Endothelial cell of umbilical vein (primary cell): ENCODE measurements at regions of chr5 and their contacts with region 1.

Region 1: GRCh38 chr5:148730943-148731861 is 76.9 kb upstream of the HTR4 start:
- DNase-seq: peak; percentile 89
- H3K4me3 ChIP-seq: no peak overlapping the region
- H3K27ac ChIP-seq: no peak overlapping the region
- H3K4me1 ChIP-seq: peaks cover 23% of the 10 kb centered on the region
- H3K27me3 ChIP-seq: no peaks in the 10 kb centered on the region
- CTCF ChIP-seq: peak; percentile 78 to 82
- POLR2A ChIP-seq: no peak

Region 2: GRCh38 chr5:148125641-148126040 is 605.6 kb before region 1 on chr5:
- CTCF ChIA-PET with region 1: interaction called, 11 read pairs
- POLR2A ChIA-PET with region 1: no interaction called
- dilution Hi-C with region 1: no loop called
- intact Hi-C with region 1: no loop called
- DNase-seq: peak; percentile 5
- H3K4me3 ChIP-seq: no peak overlapping the region
- H3K27ac ChIP-seq: no peak overlapping the region
- H3K4me1 ChIP-seq: no peaks in the 10 kb centered on the region
- H3K27me3 ChIP-seq: no peaks in the 10 kb centered on the region
- CTCF ChIP-seq: peak in 1 of 2 donors; percentile 9
- POLR2A ChIP-seq: no peak

Region 3: DNA sequence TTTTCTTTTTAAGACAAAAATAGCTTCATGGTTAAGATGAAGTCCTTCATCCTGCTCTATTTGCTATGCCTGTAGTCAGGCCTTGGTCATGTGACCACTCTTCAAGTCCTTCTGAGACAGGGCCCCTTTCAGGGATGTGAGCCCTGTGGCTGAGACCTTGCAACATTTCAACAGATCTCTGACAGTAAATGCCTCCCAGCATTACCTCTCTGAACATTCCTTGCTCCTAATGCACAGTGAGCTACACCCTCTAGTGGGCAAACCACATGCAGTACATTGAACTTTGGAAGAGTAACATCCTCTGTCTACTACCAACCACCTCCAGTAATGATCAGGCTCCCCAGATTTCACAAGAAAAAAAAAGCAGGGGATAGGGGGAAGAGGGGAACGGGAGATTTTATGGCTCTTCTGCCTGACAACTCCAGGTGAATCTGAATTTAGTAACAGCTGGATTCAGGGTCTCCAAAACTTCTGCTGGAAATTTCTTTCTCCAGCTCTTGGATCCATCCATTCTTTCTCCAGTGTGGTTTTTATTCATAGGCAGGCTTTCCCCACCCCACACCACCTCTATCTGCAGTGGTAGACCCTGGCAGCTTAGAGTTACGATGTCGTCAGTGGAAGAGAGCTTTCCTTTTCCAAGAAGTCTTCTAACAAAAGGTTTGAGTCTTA is 356.4 kb before region 1 on chr5:
- CTCF ChIA-PET with region 1: interaction called, 37 read pairs
- POLR2A ChIA-PET with region 1: no interaction called
- dilution Hi-C with region 1: no loop called
- intact Hi-C with region 1: loop called (anchors 2 kb)
- DNase-seq: peak; percentile 66
- H3K4me3 ChIP-seq: no peak overlapping the region
- H3K27ac ChIP-seq: no peak overlapping the region
- H3K4me1 ChIP-seq: peaks cover 16% of the 10 kb centered on the region
- H3K27me3 ChIP-seq: no peaks in the 10 kb centered on the region
- CTCF ChIP-seq: peak; percentile 77 to 78
- POLR2A ChIP-seq: no peak

Region 4: DNA sequence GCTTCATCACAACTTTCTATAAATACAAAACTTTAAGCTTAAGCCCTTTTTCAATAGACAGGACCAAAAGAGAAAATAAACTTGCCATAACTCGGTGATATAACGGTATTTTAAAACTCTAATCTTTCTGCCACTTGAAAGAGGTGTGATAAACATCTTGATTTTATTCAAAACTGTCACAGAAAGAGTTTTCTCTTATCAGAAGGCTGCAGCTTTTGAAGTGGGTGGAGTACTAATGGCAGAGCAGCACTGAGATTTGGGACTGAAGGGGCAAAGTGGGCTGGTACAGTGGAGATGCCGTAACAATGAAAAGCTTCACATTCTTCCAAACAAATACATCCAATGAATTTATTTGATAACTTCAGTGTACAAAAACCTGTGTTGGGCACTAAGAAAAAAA is 254.9 kb before region 1 on chr5:
- CTCF ChIA-PET with region 1: interaction called, 20 read pairs
- POLR2A ChIA-PET with region 1: no interaction called
- dilution Hi-C with region 1: no loop called
- intact Hi-C with region 1: no loop called
- DNase-seq: no peak
- H3K4me3 ChIP-seq: no peak overlapping the region
- H3K27ac ChIP-seq: no peak overlapping the region
- H3K4me1 ChIP-seq: peaks cover 28% of the 10 kb centered on the region
- H3K27me3 ChIP-seq: no peaks in the 10 kb centered on the region
- CTCF ChIP-seq: no peak
- POLR2A ChIP-seq: no peak

Region 5: DNA sequence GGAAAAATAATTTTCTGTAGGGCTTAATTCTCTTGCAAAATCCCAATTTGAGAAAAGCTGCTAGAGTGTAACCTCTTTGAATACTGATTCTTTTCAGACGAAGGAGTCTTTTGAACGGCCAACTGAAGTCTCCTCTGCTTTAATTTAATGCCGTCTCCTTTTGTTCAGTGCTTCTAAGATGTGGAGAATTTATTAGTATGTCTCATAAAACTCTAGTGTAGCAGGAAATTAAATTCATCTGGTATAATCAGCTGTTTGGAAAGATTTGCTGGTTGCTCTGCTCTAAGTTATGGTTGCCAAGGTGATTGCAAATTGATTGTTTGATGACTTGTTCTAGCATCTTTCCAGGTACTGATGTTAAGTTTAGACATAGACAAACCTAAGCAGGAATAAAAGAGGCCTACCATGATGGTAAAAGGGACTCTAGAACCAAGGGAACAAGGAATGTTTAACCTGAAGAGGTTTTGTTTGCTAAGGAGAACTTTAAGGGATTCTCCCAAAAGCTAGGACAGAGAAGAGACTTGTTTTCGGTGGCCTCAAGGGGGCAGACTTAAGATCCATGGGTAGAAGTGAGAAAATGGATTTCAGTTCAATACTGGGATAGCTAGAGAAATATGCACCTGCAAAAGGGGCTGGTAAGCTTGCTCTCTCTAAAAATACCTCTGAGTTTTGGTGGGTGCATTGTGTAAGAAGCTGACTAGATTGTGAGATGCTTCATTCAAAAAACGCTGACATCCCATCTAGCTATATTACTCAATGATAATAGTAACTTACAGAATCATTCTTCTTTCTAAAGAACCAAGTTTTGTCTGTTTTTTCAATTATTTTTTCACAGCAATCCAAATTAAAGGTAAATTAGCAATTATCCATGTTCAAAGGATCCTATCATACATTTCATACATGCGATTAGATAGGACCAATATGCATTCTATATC is 89.5 kb after region 1 on chr5:
- CTCF ChIA-PET with region 1: interaction called, 25 read pairs
- POLR2A ChIA-PET with region 1: no interaction called
- dilution Hi-C with region 1: no loop called
- intact Hi-C with region 1: no loop called
- DNase-seq: peak; percentile 45
- H3K4me3 ChIP-seq: no peak overlapping the region
- H3K27ac ChIP-seq: no peak overlapping the region
- H3K4me1 ChIP-seq: peaks cover 6% of the 10 kb centered on the region
- H3K27me3 ChIP-seq: no peaks in the 10 kb centered on the region
- CTCF ChIP-seq: peak; percentile 57 to 68
- POLR2A ChIP-seq: no peak

Region 6: GRCh38 chr5:149108651-149109280 is 377.6 kb after region 1 on chr5:
- CTCF ChIA-PET with region 1: interaction called, 368 read pairs
- POLR2A ChIA-PET with region 1: no interaction called
- dilution Hi-C with region 1: loop called (anchors 25 kb)
- intact Hi-C with region 1: no loop called
- DNase-seq: no peak
- H3K4me3 ChIP-seq: no peak overlapping the region
- H3K27ac ChIP-seq: no peak overlapping the region
- H3K4me1 ChIP-seq: no peaks in the 10 kb centered on the region
- H3K27me3 ChIP-seq: no peaks in the 10 kb centered on the region
- CTCF ChIP-seq: no peak
- POLR2A ChIP-seq: no peak